IMR-90 (cell line): ENCODE measurements at regions of chr20 and their contacts with region 1.

Region 1: GRCh38 chr20:17759241-17759848 is 59.6 kb downstream of the BANF2 start:
- DNase-seq: no peak
- ATAC-seq: no peak
- H3K4me3 ChIP-seq: no peak overlapping the region
- H3K27ac ChIP-seq: no peak overlapping the region
- H3K4me1 ChIP-seq: no peaks in the 10 kb centered on the region
- H3K27me3 ChIP-seq: peaks cover 19% of the 10 kb centered on the region
- CTCF ChIP-seq: no peak
- POLR2A ChIP-seq: no peak
- RAD21 ChIP-seq: no peak

Region 2: GRCh38 chr20:17794415-17794814 is 35.1 kb after region 1 on chr20:
- CTCF ChIA-PET with region 1: no interaction called
- POLR2A ChIA-PET with region 1: no interaction called
- dilution Hi-C with region 1: no loop called
- in situ Hi-C with region 1: no loop called
- intact Hi-C with region 1: loop called (anchors 5 kb)
- DNase-seq: no peak
- ATAC-seq: no peak
- H3K4me3 ChIP-seq: no peak overlapping the region
- H3K27ac ChIP-seq: no peak overlapping the region
- H3K4me1 ChIP-seq: peaks cover 2% of the 10 kb centered on the region; the same call in 1 of the 2 replicates
- H3K27me3 ChIP-seq: no peaks in the 10 kb centered on the region
- CTCF ChIP-seq: no peak
- POLR2A ChIP-seq: no peak
- RAD21 ChIP-seq: no peak